ENCODE measurements at regions of chr1 and their contacts with region 1.

Region 1: GRCh38 chr1:99526926-99527477 is 118.9 kb upstream of the PALMD start:
- DNase-seq: no peak
- H3K4me3 ChIP-seq: no peak overlapping the region
- H3K27me3 ChIP-seq: no peaks in the 10 kb centered on the region
- CTCF ChIP-seq: peak; percentile 49

Region 2: DNA sequence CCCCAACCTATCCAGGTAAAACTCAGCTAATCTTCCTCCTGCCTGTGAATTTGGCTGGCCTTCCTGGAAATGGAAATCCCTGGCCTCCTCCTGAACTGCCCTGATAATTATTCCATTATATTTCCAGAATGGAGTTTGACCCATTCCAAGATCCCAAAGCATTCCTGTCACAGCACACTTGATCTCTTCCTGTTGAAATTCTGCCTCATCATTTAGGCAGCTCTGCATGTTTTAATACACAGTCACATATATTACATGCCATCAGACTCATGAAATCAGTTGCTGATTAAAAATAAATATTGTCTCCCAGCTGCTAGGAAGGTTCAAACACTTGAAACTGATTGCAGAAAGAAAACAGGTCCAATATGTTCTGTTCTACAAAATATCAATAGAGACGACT is 29.3 kb before region 1 on chr1:
- CTCF ChIA-PET with region 1: interaction called, 15 read pairs
- POLR2A ChIA-PET with region 1: no interaction called
- DNase-seq: no peak
- H3K4me3 ChIP-seq: no peak overlapping the region
- H3K27me3 ChIP-seq: no peaks in the 10 kb centered on the region
- CTCF ChIP-seq: no peak

Region 3: GRCh38 chr1:99537886-99538617 is 11.1 kb after region 1 on chr1:
- CTCF ChIA-PET with region 1: interaction called, 22 read pairs
- POLR2A ChIA-PET with region 1: no interaction called
- DNase-seq: no peak
- H3K4me3 ChIP-seq: no peak overlapping the region
- H3K27me3 ChIP-seq: no peaks in the 10 kb centered on the region
- CTCF ChIP-seq: no peak

Measured in BJ (cell line).